ENCODE measurements at regions of chr4 and their contacts with region 1.

Region 1: GRCh38 chr4:6221851-6222760 is 21.8 kb upstream of the JAKMIP1 start:
- DNase-seq: no peak
- H3K4me3 Mint-ChIP-seq: no peak overlapping the region
- H3K27ac Mint-ChIP-seq: no peak overlapping the region
- H3K4me1 Mint-ChIP-seq: no peaks in the 10 kb centered on the region
- H3K27me3 Mint-ChIP-seq: peaks cover 64% of the 10 kb centered on the region

Region 2: DNA sequence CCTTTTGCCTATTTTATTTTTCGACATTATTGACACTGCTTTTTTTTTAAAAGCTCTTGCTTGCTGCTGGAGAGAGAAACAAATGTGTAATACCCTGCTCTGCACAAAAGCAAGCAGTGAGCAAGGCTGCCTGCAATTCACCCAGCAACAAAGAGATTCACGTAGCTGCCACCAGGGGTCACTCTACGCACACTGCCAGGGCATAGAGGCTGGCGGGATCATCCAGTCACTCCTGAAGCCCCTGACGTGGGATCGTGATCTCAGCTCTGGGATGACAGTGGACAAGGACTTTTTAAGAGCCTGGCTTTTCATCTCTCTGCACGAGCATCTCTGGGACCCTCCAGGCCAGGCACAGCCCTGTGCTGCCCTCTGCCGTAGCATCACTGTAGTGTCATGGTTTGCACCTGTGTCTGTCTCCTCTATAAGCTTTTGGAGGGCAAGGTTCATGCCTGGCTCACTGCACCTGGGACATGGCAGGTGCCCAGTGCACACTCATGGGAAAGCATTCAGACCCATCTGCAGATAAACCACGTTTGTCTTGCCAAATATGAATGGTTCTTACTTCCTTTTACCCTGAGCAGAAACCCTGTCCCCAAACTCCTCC is 223.7 kb before region 1 on chr4:
- intact Hi-C with region 1: loop called (anchors 10 kb)
- DNase-seq: peak; percentile 24
- H3K4me3 Mint-ChIP-seq: no peak overlapping the region
- H3K27ac Mint-ChIP-seq: no peak overlapping the region
- H3K4me1 Mint-ChIP-seq: no peaks in the 10 kb centered on the region
- H3K27me3 Mint-ChIP-seq: no peaks in the 10 kb centered on the region

Measured in activated T-helper 2 cell treated with anti-CD3 and anti-CD28 coated beads, Interferon-gamma antibody, Interleukin-2, Interleukin-4, amounts not matched to agents 10 μg/mL and 5 μg/mL and 100 μg/mL, durations not matched to agents 14 hours and 24 hours and 36 hours (primary cell).